Activated CD4-positive, alpha-beta T cell treated with anti-CD3 and anti-CD28 coated beads for 36 hours (primary cell): ENCODE measurements at regions of chr17 and their contacts with region 1.

Region 1: DNA sequence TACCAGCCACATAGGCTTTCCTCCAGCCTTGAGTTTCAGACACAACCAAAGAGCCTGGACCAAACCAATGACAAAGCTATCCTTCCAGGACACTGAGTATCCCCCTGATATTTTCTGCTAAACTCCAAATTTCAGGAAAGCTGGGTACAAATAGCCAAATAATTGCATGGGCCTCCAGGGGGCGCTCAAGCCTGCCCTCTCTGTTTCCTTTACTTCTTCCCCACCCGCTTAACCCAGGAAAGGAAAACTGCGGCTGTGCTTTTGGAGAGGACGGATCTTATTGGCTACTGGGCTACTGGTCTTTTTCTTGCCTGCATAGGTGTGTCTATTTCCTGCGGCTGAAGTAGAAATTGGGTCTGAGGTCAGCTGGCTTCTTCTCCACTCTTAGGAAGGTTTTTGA is 30.1 kb downstream of the GNGT2 start:
- DNase-seq: peak; percentile 80
- ATAC-seq: peak; percentile 58
- H3K4me3 Mint-ChIP-seq: no peak overlapping the region
- H3K27ac Mint-ChIP-seq: no peak overlapping the region
- H3K4me1 Mint-ChIP-seq: peaks cover 4% of the 10 kb centered on the region
- H3K27me3 Mint-ChIP-seq: peaks cover 1% of the 10 kb centered on the region

Region 2: DNA sequence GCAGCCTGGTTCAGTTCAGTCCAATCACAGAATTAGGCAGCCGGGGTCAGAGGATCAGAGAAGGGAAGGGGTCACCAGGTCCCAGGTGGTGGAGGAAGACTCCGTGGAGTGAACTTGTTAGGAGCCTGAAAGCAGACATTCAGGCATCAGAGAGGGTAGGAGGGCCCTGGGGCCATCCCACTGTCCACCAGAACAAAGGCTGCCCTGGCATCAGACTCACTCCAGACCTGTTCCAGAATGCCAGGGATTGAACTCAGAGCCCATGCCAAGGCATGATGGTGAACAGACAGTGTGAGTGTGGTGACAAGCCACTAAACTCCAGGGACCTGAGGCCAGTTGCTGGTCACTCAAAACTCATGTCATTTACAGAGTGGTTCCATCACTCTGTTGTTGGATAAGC is 10.1 kb before region 1 on chr17:
- CTCF ChIA-PET with region 1: interaction called, 11 read pairs
- POLR2A ChIA-PET with region 1: no interaction called
- intact Hi-C with region 1: no loop called
- DNase-seq: no peak
- ATAC-seq: no peak
- H3K4me3 Mint-ChIP-seq: no peak overlapping the region
- H3K27ac Mint-ChIP-seq: no peak overlapping the region
- H3K4me1 Mint-ChIP-seq: no peaks in the 10 kb centered on the region
- H3K27me3 Mint-ChIP-seq: peaks cover 34% of the 10 kb centered on the region

Region 3: GRCh38 chr17:49230636-49231562 is 50.6 kb after region 1 on chr17 and contains the start of gene PHOSPHO1:
- CTCF ChIA-PET with region 1: interaction called, 58 read pairs
- POLR2A ChIA-PET with region 1: no interaction called
- intact Hi-C with region 1: loop called (anchors 1 kb)
- DNase-seq: peak; percentile 91
- ATAC-seq: peak; percentile 89
- H3K4me3 Mint-ChIP-seq: peak within 1 kb of the TSS; percentile 66
- H3K27ac Mint-ChIP-seq: no peak within 1 kb of the TSS
- H3K4me1 Mint-ChIP-seq: peaks cover 6% of the 10 kb centered on the region
- H3K27me3 Mint-ChIP-seq: peaks cover 19% of the 10 kb centered on the region
- total RNA-seq, gene PHOSPHO1: not detected

Region 4: GRCh38 chr17:49290690-49291359 is 110.5 kb after region 1 on chr17:
- CTCF ChIA-PET with region 1: interaction called, 29 read pairs
- POLR2A ChIA-PET with region 1: no interaction called
- intact Hi-C with region 1: loop called (anchors 1 to 2 kb)
- DNase-seq: peak; percentile 20
- ATAC-seq: no peak
- H3K4me3 Mint-ChIP-seq: no peak overlapping the region
- H3K27ac Mint-ChIP-seq: no peak overlapping the region
- H3K4me1 Mint-ChIP-seq: peaks cover 6% of the 10 kb centered on the region
- H3K27me3 Mint-ChIP-seq: no peaks in the 10 kb centered on the region

Region 5: DNA sequence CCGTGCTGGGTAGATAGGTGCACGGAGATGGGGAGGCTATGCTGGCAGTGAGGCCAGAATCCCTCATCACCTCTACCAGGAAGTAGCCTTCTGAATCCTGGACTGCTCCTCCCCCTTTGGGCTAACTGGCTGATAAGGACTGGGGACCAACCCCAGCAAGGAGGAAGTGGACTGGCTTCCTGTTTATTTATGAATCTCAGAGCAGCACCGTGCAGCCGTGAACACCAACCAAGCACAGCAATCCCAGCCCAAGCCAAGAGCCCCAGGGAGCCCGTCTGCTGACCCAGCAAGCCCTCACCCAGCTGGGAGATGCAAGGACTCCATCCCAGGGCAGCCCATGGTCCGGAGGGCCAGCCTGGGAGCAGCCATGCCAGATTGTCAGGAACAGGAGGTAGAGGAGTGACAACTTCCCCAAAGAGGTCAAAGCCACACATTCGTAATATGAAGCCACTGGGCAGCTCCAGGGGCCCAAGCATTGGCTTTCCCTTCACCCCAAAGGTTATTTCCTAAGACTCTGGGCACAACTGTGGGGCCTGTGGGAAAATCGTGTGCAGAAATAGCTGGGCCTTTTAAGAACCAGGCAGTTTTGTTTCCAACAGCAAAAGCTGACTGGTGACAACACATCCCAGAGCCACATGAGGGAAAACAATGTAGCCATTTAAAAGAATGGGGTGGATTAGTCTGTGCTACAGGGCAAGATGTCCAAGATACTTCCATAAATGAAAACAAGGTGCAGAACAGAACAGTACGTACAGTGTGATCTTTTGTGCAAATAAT is 210.4 kb after region 1 on chr17:
- CTCF ChIA-PET with region 1: no interaction called
- POLR2A ChIA-PET with region 1: no interaction called
- intact Hi-C with region 1: loop called in 1 of 2 experiments (anchors 2 kb)
- DNase-seq: no peak
- ATAC-seq: no peak
- H3K4me3 Mint-ChIP-seq: no peak overlapping the region
- H3K27ac Mint-ChIP-seq: peak overlapping the region; percentile 16
- H3K4me1 Mint-ChIP-seq: peaks cover 54% of the 10 kb centered on the region
- H3K27me3 Mint-ChIP-seq: no peaks in the 10 kb centered on the region